GM12878 (cell line): ENCODE measurements at regions of chr3 and their contacts with region 1.

Region 1: GRCh38 chr3:3648988-3649679 is 150.1 kb upstream of the LRRN1 start:
- DNase-seq: no peak
- ATAC-seq: no peak
- H3K4me3 ChIP-seq: no peak overlapping the region
- H3K27ac ChIP-seq: no peak overlapping the region
- H3K4me1 ChIP-seq: no peaks in the 10 kb centered on the region
- H3K27me3 ChIP-seq: no peaks in the 10 kb centered on the region; a peak in 1 of 4 replicates
- CTCF ChIP-seq: no peak
- EP300 ChIP-seq: no peak
- POLR2A ChIP-seq: no peak
- RAD21 ChIP-seq: no peak

Region 2: DNA sequence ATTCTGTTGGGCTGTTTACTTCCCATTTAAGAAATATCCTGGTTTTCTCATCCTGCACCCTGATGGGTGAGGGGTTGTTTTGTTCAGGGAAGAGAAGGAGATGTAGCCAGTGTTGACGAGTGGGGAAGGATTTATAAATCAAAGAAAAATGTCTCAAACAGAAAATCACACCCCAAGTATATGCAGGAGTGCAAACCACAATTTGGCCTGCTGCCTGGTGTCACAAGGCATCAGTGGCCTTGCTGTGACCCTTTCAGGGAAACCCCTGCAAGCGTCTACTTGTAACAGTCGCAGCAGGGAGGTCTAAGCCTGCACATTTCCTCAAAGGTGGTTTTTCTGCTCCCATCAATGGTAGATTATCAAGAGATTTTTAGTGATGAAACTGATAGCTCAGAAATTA is 17.5 kb after region 1 on chr3:
- CTCF ChIA-PET with region 1: no interaction called
- POLR2A ChIA-PET with region 1: interaction called, 4 read pairs
- RAD21 ChIA-PET with region 1: interaction called, 10 read pairs
- SMC1A ChIA-PET with region 1: interaction called, 3 read pairs
- in situ Hi-C with region 1: no loop called
- intact Hi-C with region 1: no loop called
- DNase-seq: peak; percentile 56
- ATAC-seq: peak; percentile 99
- H3K4me3 ChIP-seq: no peak overlapping the region; the same call in 1 of the 2 replicates
- H3K27ac ChIP-seq: peak overlapping the region; percentile 51
- H3K4me1 ChIP-seq: peaks cover 7% of the 10 kb centered on the region
- H3K27me3 ChIP-seq: no peaks in the 10 kb centered on the region; a peak in 1 of 4 replicates
- CTCF ChIP-seq: no peak
- EP300 ChIP-seq: peak; percentile 80 to 91
- POLR2A ChIP-seq: no peak
- RAD21 ChIP-seq: 0 out of 2 replicates have a peak, but pooled peaks have one; percentile 0

Region 3: DNA sequence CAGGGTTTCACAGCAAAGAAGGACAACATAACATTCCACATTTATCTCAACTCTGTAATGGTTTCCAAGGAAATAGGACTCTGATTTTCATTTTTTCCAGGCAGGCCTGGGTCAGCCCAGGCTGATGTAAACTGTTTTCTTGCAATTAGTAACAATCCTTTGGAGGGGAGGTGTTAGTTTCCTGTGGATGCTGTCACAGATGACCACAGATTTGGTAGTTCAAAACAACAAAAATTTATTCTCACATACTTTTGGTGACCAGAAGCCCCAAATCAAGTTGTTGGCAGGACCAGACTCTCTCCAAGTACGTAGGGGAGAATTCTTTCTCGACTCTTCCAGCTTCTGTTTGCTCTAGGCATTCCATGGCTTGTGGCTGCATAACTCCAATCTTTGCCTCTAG is 1626.4 kb after region 1 on chr3:
- CTCF ChIA-PET with region 1: no interaction called
- POLR2A ChIA-PET with region 1: no interaction called
- RAD21 ChIA-PET with region 1: no interaction called
- SMC1A ChIA-PET with region 1: no interaction called
- in situ Hi-C with region 1: no loop called
- intact Hi-C with region 1: loop called (anchors 5 kb)
- DNase-seq: no peak
- ATAC-seq: no peak
- H3K4me3 ChIP-seq: no peak overlapping the region
- H3K27ac ChIP-seq: no peak overlapping the region
- H3K4me1 ChIP-seq: no peaks in the 10 kb centered on the region
- H3K27me3 ChIP-seq: no peaks in the 10 kb centered on the region
- CTCF ChIP-seq: no peak
- EP300 ChIP-seq: no peak
- POLR2A ChIP-seq: no peak
- RAD21 ChIP-seq: no peak